ENCODE measurements at regions of chr15 and their contacts with region 1.

Region 1: DNA sequence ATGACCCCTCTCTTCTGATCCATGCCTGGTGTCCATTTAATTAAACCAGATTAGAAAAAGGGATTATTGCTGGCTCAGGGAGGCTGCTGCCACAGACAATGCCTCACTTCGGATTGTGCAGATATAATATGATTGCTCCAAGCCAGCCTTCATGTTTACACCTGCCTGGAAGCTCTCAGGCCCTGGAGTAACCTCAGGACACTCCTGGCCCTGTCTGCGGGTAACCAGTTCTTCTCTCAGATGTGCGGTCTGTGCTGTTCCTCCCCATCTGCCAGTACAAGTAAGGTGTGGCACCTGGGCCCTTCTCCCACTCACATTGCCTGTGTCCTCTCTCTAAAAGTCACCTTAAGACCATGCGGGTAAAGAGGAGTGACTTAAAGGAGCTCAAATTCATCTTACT is 8.8 kb upstream of the GOLGA8J start:
- DNase-seq: no peak
- H3K4me3 ChIP-seq: no peak overlapping the region
- H3K27ac ChIP-seq: no peak overlapping the region
- H3K4me1 ChIP-seq: no peaks in the 10 kb centered on the region
- H3K27me3 ChIP-seq: no peaks in the 10 kb centered on the region
- CTCF ChIP-seq: no peak

Region 2: GRCh38 chr15:29613951-29614382 is 459.9 kb before region 1 on chr15:
- CTCF ChIA-PET with region 1: interaction called, 10 read pairs
- POLR2A ChIA-PET with region 1: no interaction called
- intact Hi-C with region 1: no loop called
- DNase-seq: peak; percentile 56
- H3K4me3 ChIP-seq: no peak overlapping the region
- H3K27ac ChIP-seq: no peak overlapping the region
- H3K4me1 ChIP-seq: no peaks in the 10 kb centered on the region
- H3K27me3 ChIP-seq: no peaks in the 10 kb centered on the region
- CTCF ChIP-seq: peak; percentile 63

Region 3: GRCh38 chr15:30001602-30002001 is 72.3 kb before region 1 on chr15:
- CTCF ChIA-PET with region 1: no interaction called
- POLR2A ChIA-PET with region 1: no interaction called
- intact Hi-C with region 1: no loop called
- DNase-seq: no peak
- H3K4me3 ChIP-seq: no peak overlapping the region
- H3K27ac ChIP-seq: no peak overlapping the region
- H3K4me1 ChIP-seq: no peaks in the 10 kb centered on the region
- H3K27me3 ChIP-seq: no peaks in the 10 kb centered on the region
- CTCF ChIP-seq: no peak

Region 4: GRCh38 chr15:30062881-30063280 is 11.0 kb before region 1 on chr15:
- CTCF ChIA-PET with region 1: no interaction called
- POLR2A ChIA-PET with region 1: no interaction called
- intact Hi-C with region 1: no loop called
- DNase-seq: no peak
- H3K4me3 ChIP-seq: no peak overlapping the region
- H3K27ac ChIP-seq: no peak overlapping the region
- H3K4me1 ChIP-seq: peaks cover 6% of the 10 kb centered on the region
- H3K27me3 ChIP-seq: no peaks in the 10 kb centered on the region
- CTCF ChIP-seq: no peak